ENCODE measurements at regions of chr20 and their contacts with region 1.

Region 1: GRCh38 chr20:17995967-17996819 is 27.4 kb downstream of the MGME1 start:
- DNase-seq: peak in 7 of 9 donors; percentile 35 to 68 (median 59)
- ATAC-seq: peak; percentile 94
- H3K4me3 ChIP-seq: no peak overlapping the region
- H3K4me3 Mint-ChIP-seq: no peak overlapping the region
- H3K27ac ChIP-seq: no peak overlapping the region
- H3K27ac Mint-ChIP-seq: peak overlapping the region in 1 of 9 donors; percentile 48
- H3K4me1 ChIP-seq: peaks cover 0 to 8% of the 10 kb centered on the region in 2 donors
- H3K4me1 Mint-ChIP-seq: peaks cover 4 to 45% (median 6%) of the 10 kb centered on the region in 7 donors
- H3K27me3 ChIP-seq: no peaks in the 10 kb centered on the region
- H3K27me3 Mint-ChIP-seq: peaks cover 3 to 13% (median 8%) of the 10 kb centered on the region in 5 donors

Region 2: DNA sequence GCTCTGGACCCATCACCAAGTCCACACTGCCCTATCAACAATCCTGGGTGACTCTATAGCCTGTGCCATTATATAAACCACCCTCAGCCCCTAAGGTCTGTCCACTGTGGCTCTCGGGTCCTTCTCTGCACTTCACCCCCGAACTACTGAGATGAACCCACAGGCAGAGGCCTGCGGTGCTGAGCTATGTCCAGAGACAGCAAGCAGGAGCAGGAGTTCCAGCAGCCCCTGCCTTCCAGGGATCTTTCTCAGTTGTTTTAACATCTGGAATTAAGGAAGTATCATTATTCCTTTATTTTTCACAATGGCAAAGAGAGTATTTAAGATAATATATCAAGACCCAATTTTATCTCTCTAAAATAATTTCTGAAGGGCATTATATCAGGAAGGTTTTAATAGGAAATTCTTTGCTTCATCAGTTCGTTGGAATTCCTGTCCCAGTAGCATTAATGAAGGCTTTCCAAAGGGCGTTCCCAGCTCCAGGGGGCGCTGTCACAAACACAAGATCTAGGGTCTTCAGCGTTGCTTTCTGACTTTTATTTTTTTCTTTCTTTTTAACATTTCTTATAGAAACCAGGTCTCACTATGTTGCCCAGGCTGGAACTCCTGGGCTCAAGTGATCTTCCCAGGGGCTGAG is 341.4 kb before region 1 on chr20:
- CTCF ChIA-PET with region 1: no interaction called
- POLR2A ChIA-PET with region 1: no interaction called
- intact Hi-C with region 1: loop called in 1 of 2 experiments (anchors 1 kb)
- DNase-seq: no peak
- ATAC-seq: no peak
- H3K4me3 ChIP-seq: no peak overlapping the region
- H3K4me3 Mint-ChIP-seq: no peak overlapping the region
- H3K27ac ChIP-seq: no peak overlapping the region
- H3K27ac Mint-ChIP-seq: peak overlapping the region in 1 of 9 donors; percentile 7
- H3K4me1 ChIP-seq: no peaks in the 10 kb centered on the region
- H3K4me1 Mint-ChIP-seq: peaks cover 0 to 21% (median 4%) of the 10 kb centered on the region in 7 donors
- H3K27me3 ChIP-seq: no peaks in the 10 kb centered on the region
- H3K27me3 Mint-ChIP-seq: no peaks in the 10 kb centered on the region

Region 3: DNA sequence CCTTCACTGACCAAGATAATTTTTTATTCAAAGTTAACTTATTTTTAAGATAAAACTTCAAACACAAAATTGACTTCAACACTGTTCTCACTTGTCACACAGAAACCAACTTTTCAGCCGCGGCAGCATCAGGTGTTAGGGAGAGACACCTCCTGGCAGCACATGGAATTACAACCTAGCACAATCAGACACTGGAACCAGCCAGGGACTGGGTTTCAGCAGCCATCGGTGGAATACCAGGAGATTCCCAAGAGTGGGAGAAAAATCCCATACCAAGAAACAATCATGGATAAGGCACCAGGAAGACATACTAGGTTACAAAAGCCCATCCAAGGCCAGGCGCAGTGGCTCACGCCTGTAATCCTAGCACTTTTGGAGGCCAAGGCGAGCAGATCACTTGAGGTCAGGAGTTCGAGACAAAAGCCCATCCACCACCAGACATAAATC is 97.6 kb before region 1 on chr20:
- CTCF ChIA-PET with region 1: no interaction called
- POLR2A ChIA-PET with region 1: no interaction called
- intact Hi-C with region 1: loop called (anchors 1 to 2 kb)
- DNase-seq: peak; percentile 23 to 64 (median 54)
- ATAC-seq: peak; percentile 81
- H3K4me3 ChIP-seq: no peak overlapping the region
- H3K4me3 Mint-ChIP-seq: no peak overlapping the region
- H3K27ac ChIP-seq: no peak overlapping the region
- H3K27ac Mint-ChIP-seq: no peak overlapping the region
- H3K4me1 ChIP-seq: no peaks in the 10 kb centered on the region
- H3K4me1 Mint-ChIP-seq: peaks cover 0 to 21% (median 11%) of the 10 kb centered on the region in 7 donors
- H3K27me3 ChIP-seq: no peaks in the 10 kb centered on the region
- H3K27me3 Mint-ChIP-seq: peaks cover 22 to 41% (median 34%) of the 10 kb centered on the region in 5 donors

Region 4: DNA sequence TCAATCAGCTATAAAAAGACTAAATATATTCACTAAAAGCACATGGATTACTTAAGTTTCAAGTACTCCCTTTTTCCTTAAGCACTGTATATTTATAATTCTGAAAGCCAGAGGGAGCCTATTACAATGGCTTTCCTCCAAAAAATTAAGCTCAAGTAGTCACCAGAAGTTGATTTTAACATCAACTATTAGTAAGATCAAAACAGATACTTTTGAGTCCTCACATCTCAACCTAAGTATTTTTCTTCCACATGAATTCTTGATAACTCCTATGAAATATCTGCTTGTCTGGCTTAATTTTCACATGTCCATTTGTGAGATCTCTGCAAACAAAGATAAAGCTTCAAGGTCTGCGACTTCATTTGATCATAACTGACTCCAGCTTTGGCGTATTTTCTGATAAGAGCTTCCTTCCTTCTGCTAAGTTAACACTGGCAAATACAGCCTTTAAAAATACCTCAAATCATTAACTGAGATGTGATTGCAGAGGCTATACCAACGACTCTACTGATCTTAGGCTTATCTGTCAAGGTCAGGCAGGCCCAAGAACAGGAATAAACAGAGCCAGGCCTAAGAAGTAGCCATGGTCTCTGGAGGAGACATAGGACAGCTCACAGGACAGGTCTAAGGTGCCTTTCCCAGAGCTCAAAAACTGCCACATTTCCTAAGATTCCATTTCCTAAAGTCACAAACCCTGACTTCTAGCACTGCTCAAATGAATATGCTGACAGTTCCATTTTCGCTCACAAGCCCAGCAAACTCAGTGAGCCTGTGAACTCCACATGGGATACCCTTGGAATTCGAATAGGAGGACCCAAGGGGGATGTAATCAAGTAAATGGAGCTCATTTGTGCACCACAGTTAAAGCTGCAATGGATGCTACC is 37.6 kb before region 1 on chr20:
- CTCF ChIA-PET with region 1: no interaction called
- POLR2A ChIA-PET with region 1: no interaction called
- intact Hi-C with region 1: loop called in 1 of 2 experiments (anchors 5 kb)
- DNase-seq: no peak
- ATAC-seq: no peak
- H3K4me3 ChIP-seq: no peak overlapping the region
- H3K4me3 Mint-ChIP-seq: peak overlapping the region in 5 of 10 donors; percentile 14 to 62 (median 49)
- H3K27ac ChIP-seq: peak overlapping the region; percentile 1
- H3K27ac Mint-ChIP-seq: peak overlapping the region in 5 of 9 donors; percentile 18 to 83 (median 60)
- H3K4me1 ChIP-seq: peaks cover 30 to 40% of the 10 kb centered on the region in 2 donors
- H3K4me1 Mint-ChIP-seq: peaks cover 50 to 82% (median 75%) of the 10 kb centered on the region in 7 donors
- H3K27me3 ChIP-seq: no peaks in the 10 kb centered on the region
- H3K27me3 Mint-ChIP-seq: no peaks in the 10 kb centered on the region

Measured in naive thymus-derived CD4-positive, alpha-beta T cell (primary cell).